ENCODE measurements at regions of chr9 and their contacts with region 1.

Region 1: GRCh38 chr9:90914868-90915483 is 113.4 kb downstream of the SYK start:
- DNase-seq: peak; percentile 37 to 71 (median 61)
- ATAC-seq: peak; percentile 90
- H3K4me3 ChIP-seq: no peak overlapping the region
- H3K4me3 Mint-ChIP-seq: no peak overlapping the region
- H3K27ac ChIP-seq: no peak overlapping the region
- H3K27ac Mint-ChIP-seq: peak overlapping the region in 1 of 9 donors; percentile 60
- H3K4me1 ChIP-seq: no peaks in the 10 kb centered on the region
- H3K4me1 Mint-ChIP-seq: peaks cover 0 to 2% (median 0%) of the 10 kb centered on the region in 7 donors
- H3K27me3 ChIP-seq: no peaks in the 10 kb centered on the region
- H3K27me3 Mint-ChIP-seq: no peaks in the 10 kb centered on the region

Region 2: DNA sequence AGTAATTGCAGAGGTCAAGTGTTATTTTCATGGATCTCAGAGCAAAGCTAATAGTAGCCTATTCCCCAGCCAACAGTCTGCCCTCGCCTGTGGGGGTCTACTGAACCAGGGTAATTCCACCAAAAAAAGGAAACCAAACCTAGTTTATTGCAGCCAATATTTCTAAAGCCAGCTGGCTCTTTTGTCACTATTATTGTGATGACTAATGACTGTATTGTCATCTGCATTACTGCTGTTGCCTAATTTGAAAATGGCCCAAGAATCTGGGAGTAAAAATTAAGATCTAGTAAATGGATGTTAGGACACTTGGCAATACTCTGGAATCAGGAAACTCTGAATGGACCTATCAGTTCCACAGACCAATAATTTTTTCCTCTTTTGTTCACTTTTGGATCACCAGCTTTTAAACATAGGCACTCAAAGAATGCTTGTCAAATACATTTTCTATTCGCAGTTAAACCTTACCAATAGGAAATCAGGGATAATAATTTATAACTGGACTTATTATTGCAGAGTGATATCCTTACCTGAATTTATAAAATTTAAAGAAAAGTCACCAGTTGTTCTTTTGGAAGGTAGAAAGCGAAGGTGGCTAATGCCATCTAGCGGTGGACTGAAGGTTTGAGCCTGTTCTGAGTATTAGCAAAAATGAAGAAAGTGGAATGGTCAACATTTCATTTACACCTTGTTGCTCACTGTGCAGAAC is 44.2 kb before region 1 on chr9:
- CTCF ChIA-PET with region 1: no interaction called
- POLR2A ChIA-PET with region 1: no interaction called
- intact Hi-C with region 1: no loop called
- DNase-seq: peak in 5 of 9 donors; percentile 32 to 50 (median 44)
- ATAC-seq: peak; percentile 60
- H3K4me3 ChIP-seq: no peak overlapping the region
- H3K4me3 Mint-ChIP-seq: no peak overlapping the region
- H3K27ac ChIP-seq: no peak overlapping the region
- H3K27ac Mint-ChIP-seq: no peak overlapping the region
- H3K4me1 ChIP-seq: no peaks in the 10 kb centered on the region
- H3K4me1 Mint-ChIP-seq: no peaks in the 10 kb centered on the region
- H3K27me3 ChIP-seq: peaks cover 0 to 2% of the 10 kb centered on the region in 2 donors
- H3K27me3 Mint-ChIP-seq: peaks cover 0 to 26% (median 6%) of the 10 kb centered on the region in 5 donors

Region 3: DNA sequence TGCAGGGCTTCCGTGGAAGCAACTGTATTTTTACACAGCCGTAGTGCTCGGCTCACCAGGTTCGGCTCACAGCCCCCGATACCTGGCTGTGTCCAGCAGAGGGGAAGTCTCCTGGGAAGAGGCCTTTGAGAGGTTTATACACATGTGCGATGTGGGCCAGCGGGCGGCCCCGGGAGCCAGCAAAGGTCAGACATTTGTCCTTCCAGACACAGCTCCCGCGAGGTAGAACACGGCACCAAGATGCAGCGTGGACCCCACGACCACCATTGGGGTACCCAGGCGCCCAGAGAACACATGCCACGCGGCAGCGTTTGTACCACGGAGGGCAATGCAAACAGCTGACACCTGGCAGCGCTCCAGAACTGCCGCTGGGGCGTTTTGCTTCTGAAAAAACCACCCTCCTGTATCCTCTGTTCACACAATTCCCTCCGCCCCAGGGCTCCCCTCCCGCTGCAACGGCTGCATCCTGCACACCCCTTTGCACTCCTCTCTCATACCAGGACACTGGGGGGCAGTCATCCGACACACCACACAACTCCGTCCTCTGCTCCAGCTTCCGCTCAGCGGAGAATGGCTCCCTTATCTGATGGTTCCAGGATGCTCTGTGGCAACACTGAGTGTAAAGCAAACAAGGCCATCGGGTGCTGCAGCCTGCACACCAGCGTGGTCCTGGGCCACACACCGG is 122.0 kb after region 1 on chr9:
- CTCF ChIA-PET with region 1: interaction called, 4 read pairs
- POLR2A ChIA-PET with region 1: no interaction called
- intact Hi-C with region 1: loop called (anchors 1 to 10 kb)
- DNase-seq: peak; percentile 31 to 69 (median 54)
- ATAC-seq: peak; percentile 88
- H3K4me3 ChIP-seq: no peak overlapping the region
- H3K4me3 Mint-ChIP-seq: peak overlapping the region in 9 of 10 donors; percentile 13 to 73 (median 37)
- H3K27ac ChIP-seq: no peak overlapping the region
- H3K27ac Mint-ChIP-seq: peak overlapping the region in 5 of 9 donors; percentile 13 to 38 (median 26)
- H3K4me1 ChIP-seq: peaks cover 8 to 11% of the 10 kb centered on the region in 2 donors
- H3K4me1 Mint-ChIP-seq: peaks cover 10 to 65% (median 11%) of the 10 kb centered on the region in 7 donors
- H3K27me3 ChIP-seq: no peaks in the 10 kb centered on the region
- H3K27me3 Mint-ChIP-seq: peaks cover 0 to 34% (median 14%) of the 10 kb centered on the region in 5 donors

Region 4: GRCh38 chr9:91433180-91433579 is 518.2 kb after region 1 on chr9:
- CTCF ChIA-PET with region 1: interaction called, 73 read pairs
- POLR2A ChIA-PET with region 1: no interaction called
- intact Hi-C with region 1: loop called (anchors 1 kb)
- DNase-seq: peak in 4 of 9 donors; percentile 3 to 24 (median 15)
- ATAC-seq: peak; percentile 56
- H3K4me3 ChIP-seq: no peak overlapping the region
- H3K4me3 Mint-ChIP-seq: no peak overlapping the region
- H3K27ac ChIP-seq: no peak overlapping the region
- H3K27ac Mint-ChIP-seq: no peak overlapping the region
- H3K4me1 ChIP-seq: no peaks in the 10 kb centered on the region
- H3K4me1 Mint-ChIP-seq: peaks cover 0 to 20% (median 0%) of the 10 kb centered on the region in 7 donors
- H3K27me3 ChIP-seq: no peaks in the 10 kb centered on the region
- H3K27me3 Mint-ChIP-seq: peaks cover 5 to 23% (median 14%) of the 10 kb centered on the region in 5 donors

Region 5: GRCh38 chr9:91536211-91536691 is 621.3 kb after region 1 on chr9:
- CTCF ChIA-PET with region 1: no interaction called
- POLR2A ChIA-PET with region 1: no interaction called
- intact Hi-C with region 1: no loop called
- DNase-seq: no peak
- ATAC-seq: no peak
- H3K4me3 ChIP-seq: no peak overlapping the region
- H3K4me3 Mint-ChIP-seq: no peak overlapping the region
- H3K27ac ChIP-seq: no peak overlapping the region
- H3K27ac Mint-ChIP-seq: no peak overlapping the region
- H3K4me1 ChIP-seq: no peaks in the 10 kb centered on the region
- H3K4me1 Mint-ChIP-seq: peaks cover 0 to 13% (median 0%) of the 10 kb centered on the region in 7 donors
- H3K27me3 ChIP-seq: no peaks in the 10 kb centered on the region
- H3K27me3 Mint-ChIP-seq: peaks cover 11 to 42% (median 18%) of the 10 kb centered on the region in 5 donors

Region 6: GRCh38 chr9:91681461-91682305 is 766.7 kb after region 1 on chr9:
- CTCF ChIA-PET with region 1: no interaction called
- POLR2A ChIA-PET with region 1: no interaction called
- intact Hi-C with region 1: loop called (anchors 1 kb)
- DNase-seq: peak in 7 of 9 donors; percentile 11 to 76 (median 37)
- ATAC-seq: peak; percentile 85
- H3K4me3 ChIP-seq: no peak overlapping the region
- H3K4me3 Mint-ChIP-seq: peak overlapping the region in 6 of 10 donors; percentile 7 to 46 (median 31)
- H3K27ac ChIP-seq: no peak overlapping the region
- H3K27ac Mint-ChIP-seq: no peak overlapping the region
- H3K4me1 ChIP-seq: no peaks in the 10 kb centered on the region
- H3K4me1 Mint-ChIP-seq: peaks cover 0 to 5% (median 0%) of the 10 kb centered on the region in 7 donors
- H3K27me3 ChIP-seq: no peaks in the 10 kb centered on the region
- H3K27me3 Mint-ChIP-seq: peaks cover 21 to 46% (median 35%) of the 10 kb centered on the region in 5 donors

Region 7: DNA sequence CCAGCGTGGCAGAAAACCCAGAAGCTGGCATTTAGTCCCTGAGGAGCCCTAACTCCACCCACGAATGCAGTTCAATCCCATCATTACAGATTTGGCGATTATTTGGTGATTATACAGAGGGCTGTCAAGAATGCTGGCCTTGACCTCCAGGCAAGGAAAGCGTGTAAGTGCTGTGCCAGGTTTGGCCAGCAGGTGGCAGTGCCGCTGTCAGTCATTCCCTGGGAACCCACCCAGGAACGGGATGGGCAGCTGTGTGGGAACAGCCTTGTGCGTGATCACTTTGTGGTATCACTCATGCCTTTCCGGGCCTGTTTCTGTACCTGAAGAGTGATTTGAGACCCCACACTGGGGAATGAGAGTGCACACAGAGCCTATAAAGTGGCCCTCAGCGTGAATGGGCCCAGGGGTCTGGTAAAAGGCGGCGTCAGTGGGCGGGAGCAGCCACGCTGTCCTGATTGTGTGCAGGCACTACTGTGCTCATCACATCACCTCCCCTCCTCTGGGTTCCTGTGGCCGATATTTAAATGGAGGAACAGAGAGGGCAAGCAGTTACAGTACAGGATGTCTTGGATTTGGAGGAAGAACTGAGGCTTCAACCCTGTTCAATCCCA is 819.5 kb after region 1 on chr9:
- CTCF ChIA-PET with region 1: interaction called, 4 read pairs
- POLR2A ChIA-PET with region 1: no interaction called
- intact Hi-C with region 1: loop called in 1 of 2 experiments (anchors 1 kb)
- DNase-seq: peak in 6 of 9 donors; percentile 18 to 67 (median 33)
- ATAC-seq: peak; percentile 59
- H3K4me3 ChIP-seq: no peak overlapping the region
- H3K4me3 Mint-ChIP-seq: no peak overlapping the region
- H3K27ac ChIP-seq: no peak overlapping the region
- H3K27ac Mint-ChIP-seq: no peak overlapping the region
- H3K4me1 ChIP-seq: no peaks in the 10 kb centered on the region
- H3K4me1 Mint-ChIP-seq: peaks cover 0 to 5% (median 0%) of the 10 kb centered on the region in 7 donors
- H3K27me3 ChIP-seq: no peaks in the 10 kb centered on the region
- H3K27me3 Mint-ChIP-seq: peaks cover 0 to 15% (median 11%) of the 10 kb centered on the region in 5 donors

Region 8: GRCh38 chr9:91873637-91874051 is 958.7 kb after region 1 on chr9:
- CTCF ChIA-PET with region 1: no interaction called
- POLR2A ChIA-PET with region 1: no interaction called
- intact Hi-C with region 1: no loop called
- DNase-seq: no peak
- ATAC-seq: no peak
- H3K4me3 ChIP-seq: no peak overlapping the region
- H3K4me3 Mint-ChIP-seq: no peak overlapping the region
- H3K27ac ChIP-seq: no peak overlapping the region
- H3K27ac Mint-ChIP-seq: no peak overlapping the region
- H3K4me1 ChIP-seq: no peaks in the 10 kb centered on the region
- H3K4me1 Mint-ChIP-seq: no peaks in the 10 kb centered on the region
- H3K27me3 ChIP-seq: no peaks in the 10 kb centered on the region
- H3K27me3 Mint-ChIP-seq: peaks cover 0 to 48% (median 8%) of the 10 kb centered on the region in 5 donors

Measured in naive thymus-derived CD4-positive, alpha-beta T cell (primary cell).